ENCODE measurements at regions of chr1 and their contacts with region 1.

Region 1: DNA sequence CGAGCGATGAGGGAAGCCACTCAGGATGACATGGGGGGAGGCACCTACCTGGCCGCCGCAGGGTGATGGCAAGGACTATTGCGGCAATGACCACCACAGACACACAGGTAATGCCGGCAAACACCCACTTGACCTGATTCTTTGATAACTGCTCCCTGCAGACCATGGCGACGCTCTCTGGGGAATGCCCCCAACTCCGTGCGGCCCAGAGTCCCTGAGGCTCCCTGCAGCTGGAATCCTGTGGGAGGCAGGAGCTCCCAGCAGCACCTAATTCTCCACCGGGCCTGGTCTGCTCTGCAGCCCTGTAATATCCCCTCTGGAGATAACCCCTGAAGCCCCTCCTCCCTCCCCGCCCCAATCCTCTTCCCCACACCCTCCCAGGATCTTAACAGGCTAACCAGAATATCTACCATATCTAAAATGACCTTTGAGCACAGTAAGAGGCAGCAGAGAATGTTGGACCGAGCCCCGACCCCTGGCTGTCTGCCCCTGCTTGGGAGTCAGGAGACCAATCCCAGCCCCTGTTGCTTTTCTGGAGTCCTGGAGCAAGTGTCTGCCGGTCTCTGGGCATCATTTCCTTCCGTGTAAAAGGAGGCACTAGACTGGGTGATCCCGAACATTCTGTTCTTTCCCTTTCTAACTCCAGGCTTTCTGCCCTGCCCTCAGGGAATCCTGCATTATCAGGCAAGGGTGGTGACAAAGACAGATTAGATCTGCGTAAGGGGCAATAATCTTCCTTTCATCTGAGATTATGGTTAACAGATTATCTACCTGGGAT is at the start of gene FAM151A:
- DNase-seq: peak in 1 of 2 donors; percentile 56
- ATAC-seq: peak; percentile 30 to 66 (median 56)
- H3K4me3 ChIP-seq: no peak within 1 kb of the TSS
- H3K27ac ChIP-seq: peak within 1 kb of the TSS in 4 of 10 donors; percentile 31 to 62 (median 46)
- H3K4me1 ChIP-seq: peaks cover 0 to 19% (median 0%) of the 10 kb centered on the region in 9 donors
- H3K27me3 ChIP-seq: peaks cover 0 to 5% (median 0%) of the 10 kb centered on the region in 7 donors
- CTCF ChIP-seq: no peak
- total RNA-seq, gene FAM151A: 0.39 to 2.7 (median 0.94) TPM in 9 of 10 donors, not detected in the other

Region 2: GRCh38 chr1:54604572-54605370 is 18.6 kb before region 1 on chr1:
- intact Hi-C with region 1: loop called in 1 of 10 experiments (anchors 2 kb)
- DNase-seq: no peak
- ATAC-seq: no peak
- H3K4me3 ChIP-seq: no peak overlapping the region
- H3K27ac ChIP-seq: no peak overlapping the region
- H3K4me1 ChIP-seq: peaks cover 0 to 10% (median 0%) of the 10 kb centered on the region in 9 donors
- H3K27me3 ChIP-seq: no peaks in the 10 kb centered on the region
- CTCF ChIP-seq: no peak